Activated CD4-positive, alpha-beta memory T cell treated with anti-CD3 and anti-CD28 coated beads, Interleukin-2, amount 10 ng/mL, durations not matched to agents 7 days and 5 days (primary cell): ENCODE measurements at regions of chr1 and their contacts with region 1.

Region 1: GRCh38 chr1:152459596-152460528 is 45.8 kb upstream of the CRNN start:
- DNase-seq: peak; percentile 77
- H3K4me3 Mint-ChIP-seq: peak overlapping the region; percentile 50
- H3K27ac Mint-ChIP-seq: peak overlapping the region; percentile 68
- H3K4me1 Mint-ChIP-seq: peaks cover 28% of the 10 kb centered on the region
- H3K27me3 Mint-ChIP-seq: peaks cover 14% of the 10 kb centered on the region

Region 2: GRCh38 chr1:152047730-152048402 is 412.0 kb before region 1 on chr1:
- CTCF ChIA-PET with region 1: interaction called, 18 read pairs
- POLR2A ChIA-PET with region 1: interaction called, 4 read pairs
- DNase-seq: peak; percentile 93
- H3K4me3 Mint-ChIP-seq: peak overlapping the region; percentile 73
- H3K27ac Mint-ChIP-seq: peak overlapping the region; percentile 97
- H3K4me1 Mint-ChIP-seq: peaks cover 55% of the 10 kb centered on the region
- H3K27me3 Mint-ChIP-seq: peaks cover 4% of the 10 kb centered on the region

Region 3: DNA sequence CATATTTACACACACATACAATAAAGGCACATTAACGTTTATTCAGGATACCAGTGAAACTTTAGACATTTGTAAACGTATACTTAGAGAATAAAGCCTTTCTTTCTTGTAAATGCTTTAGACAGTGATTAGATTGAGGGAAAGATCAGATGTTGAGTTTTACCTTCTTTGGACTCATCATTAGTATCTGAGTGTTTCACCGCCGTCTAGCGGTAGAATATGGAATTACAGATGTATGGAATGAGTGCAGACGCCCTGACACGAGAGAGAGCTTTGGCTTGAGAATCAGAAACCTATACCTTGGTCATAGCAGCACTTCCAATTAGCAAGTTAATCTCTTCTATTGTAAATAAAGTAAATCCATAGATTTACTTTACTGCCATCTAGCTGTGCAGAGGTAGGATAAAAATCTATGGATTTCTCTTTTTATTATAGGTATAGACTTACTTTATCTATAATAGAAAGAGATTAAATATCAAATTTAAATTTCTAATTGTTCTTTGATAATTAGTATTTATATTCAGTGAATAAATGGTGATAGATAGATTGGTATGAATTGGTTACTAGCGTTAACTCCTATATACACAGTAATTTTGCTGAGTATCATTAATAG is 112.6 kb before region 1 on chr1:
- CTCF ChIA-PET with region 1: interaction called, 27 read pairs
- POLR2A ChIA-PET with region 1: interaction called, 3 read pairs
- DNase-seq: peak; percentile 33
- H3K4me3 Mint-ChIP-seq: no peak overlapping the region
- H3K27ac Mint-ChIP-seq: no peak overlapping the region
- H3K4me1 Mint-ChIP-seq: no peaks in the 10 kb centered on the region
- H3K27me3 Mint-ChIP-seq: peaks cover 23% of the 10 kb centered on the region

Region 4: DNA sequence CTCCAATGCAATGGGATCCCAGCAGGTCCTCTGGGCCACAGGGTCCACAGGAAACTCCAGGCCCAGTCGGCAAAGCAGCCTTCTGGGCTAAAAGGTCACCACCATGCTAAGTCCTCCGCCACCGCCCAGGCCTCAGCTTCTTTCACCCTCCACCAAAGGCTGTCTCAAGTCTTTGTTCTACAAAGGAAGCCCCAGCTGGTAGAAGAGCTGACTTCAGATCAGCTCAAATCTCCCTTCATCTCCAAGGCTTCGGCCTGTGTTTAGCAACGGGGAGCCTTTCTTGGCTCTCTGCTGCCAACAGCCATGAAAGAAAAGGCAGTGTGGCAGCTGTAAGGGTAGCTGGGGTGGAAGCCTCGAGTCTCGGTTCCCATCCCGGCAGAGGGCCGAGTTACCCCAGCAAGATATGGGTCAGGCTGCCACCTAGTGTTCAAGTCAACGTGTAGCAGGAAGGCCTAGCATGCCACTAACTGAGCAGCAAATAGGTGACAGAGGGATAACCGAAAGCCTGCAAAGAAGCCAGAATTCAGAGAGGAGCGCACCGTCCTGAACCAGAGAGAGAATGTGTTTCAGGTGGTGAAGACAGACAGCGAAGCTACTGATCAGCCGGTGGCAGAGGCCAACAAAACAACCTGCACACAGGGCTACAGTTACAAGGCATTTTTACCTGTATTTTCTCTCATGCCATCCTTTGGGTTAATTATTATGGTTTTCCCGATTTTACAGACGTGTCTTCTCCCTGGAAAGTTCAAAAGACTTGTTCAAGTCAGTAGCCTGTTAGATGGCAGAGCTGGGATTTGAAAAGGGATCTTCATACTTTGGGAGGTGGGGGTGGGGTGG is 19.0 kb before region 1 on chr1:
- CTCF ChIA-PET with region 1: interaction called, 30 read pairs
- POLR2A ChIA-PET with region 1: no interaction called
- DNase-seq: peak; percentile 72
- H3K4me3 Mint-ChIP-seq: no peak overlapping the region
- H3K27ac Mint-ChIP-seq: no peak overlapping the region
- H3K4me1 Mint-ChIP-seq: peaks cover 2% of the 10 kb centered on the region
- H3K27me3 Mint-ChIP-seq: peaks cover 25% of the 10 kb centered on the region

Region 5: GRCh38 chr1:152479792-152480595 is 20.1 kb after region 1 on chr1:
- CTCF ChIA-PET with region 1: interaction called, 15 read pairs
- POLR2A ChIA-PET with region 1: no interaction called
- DNase-seq: peak; percentile 64
- H3K4me3 Mint-ChIP-seq: no peak overlapping the region
- H3K27ac Mint-ChIP-seq: no peak overlapping the region
- H3K4me1 Mint-ChIP-seq: peaks cover 2% of the 10 kb centered on the region
- H3K27me3 Mint-ChIP-seq: no peaks in the 10 kb centered on the region